Ovary (tissue), 10 donors: ENCODE measurements at regions of chr2 and their contacts with region 1.

Region 1: GRCh38 chr2:120817136-120817955 is 81.7 kb downstream of the GLI2 start:
- DNase-seq: peak in 2 of 5 donors; percentile 57
- H3K4me3 ChIP-seq: no peak overlapping the region
- H3K27ac ChIP-seq: peak overlapping the region in 1 of 2 donors; percentile 48
- H3K4me1 ChIP-seq: peaks cover 34% of the 10 kb centered on the region
- H3K27me3 ChIP-seq: no peaks in the 10 kb centered on the region
- CTCF ChIP-seq: no peak
- EP300 ChIP-seq: no peak
- POLR2A ChIP-seq: no peak

Region 2: GRCh38 chr2:120791964-120792302 is 25.4 kb before region 1 on chr2:
- intact Hi-C with region 1: loop called in 1 of 4 experiments (anchors 2 kb)
- DNase-seq: no peak
- H3K4me3 ChIP-seq: no peak overlapping the region
- H3K27ac ChIP-seq: no peak overlapping the region
- H3K4me1 ChIP-seq: peaks cover 27% of the 10 kb centered on the region
- H3K27me3 ChIP-seq: no peaks in the 10 kb centered on the region
- CTCF ChIP-seq: no peak
- EP300 ChIP-seq: no peak
- POLR2A ChIP-seq: no peak

Region 3: GRCh38 chr2:120912101-120912985 is 95.0 kb after region 1 on chr2:
- intact Hi-C with region 1: no loop called
- DNase-seq: peak; percentile 81 to 91 (median 86)
- H3K4me3 ChIP-seq: peak overlapping the region; percentile 25
- H3K27ac ChIP-seq: peak overlapping the region; percentile 79 to 85
- H3K4me1 ChIP-seq: peaks cover 50% of the 10 kb centered on the region
- H3K27me3 ChIP-seq: no peaks in the 10 kb centered on the region
- CTCF ChIP-seq: peak in 1 of 3 donors; percentile 9
- EP300 ChIP-seq: no peak
- POLR2A ChIP-seq: no peak